ENCODE measurements at regions of chr4 and their contacts with region 1.

Region 1: DNA sequence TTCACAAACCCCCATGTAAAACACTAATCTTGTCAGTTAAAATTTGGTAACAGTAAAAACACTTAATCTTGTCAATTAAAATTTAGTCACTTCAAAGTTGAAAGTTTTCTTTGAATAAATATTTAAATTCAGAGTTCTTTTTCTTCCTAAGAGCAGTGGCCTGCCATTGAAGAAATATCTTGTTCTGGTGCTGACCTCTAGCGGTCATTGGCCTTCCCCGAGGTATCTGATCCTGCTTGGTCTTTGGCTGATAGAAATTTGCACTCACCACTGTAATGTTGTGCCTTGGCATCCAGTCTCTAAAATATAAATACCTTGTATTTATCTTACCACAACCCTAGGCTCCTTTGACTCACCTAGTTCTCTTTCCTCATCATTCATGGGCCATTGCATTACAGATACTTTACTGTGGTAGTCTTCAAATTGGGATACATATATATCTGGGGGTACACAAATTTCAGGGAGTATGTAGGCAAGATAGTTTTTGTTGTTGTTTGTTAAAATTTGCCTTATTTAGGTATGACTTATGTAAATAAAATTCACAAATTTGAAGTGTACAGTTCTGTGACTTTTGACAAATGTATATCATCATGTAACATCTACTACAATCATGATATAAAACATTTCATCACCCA is 6.7 kb upstream of the ART3 start:
- DNase-seq: peak; percentile 55
- H3K4me3 ChIP-seq: no peak overlapping the region
- H3K27ac ChIP-seq: no peak overlapping the region
- H3K4me1 ChIP-seq: peaks cover 4% of the 10 kb centered on the region
- H3K27me3 ChIP-seq: no peaks in the 10 kb centered on the region
- CTCF ChIP-seq: peak; percentile 94

Region 2: DNA sequence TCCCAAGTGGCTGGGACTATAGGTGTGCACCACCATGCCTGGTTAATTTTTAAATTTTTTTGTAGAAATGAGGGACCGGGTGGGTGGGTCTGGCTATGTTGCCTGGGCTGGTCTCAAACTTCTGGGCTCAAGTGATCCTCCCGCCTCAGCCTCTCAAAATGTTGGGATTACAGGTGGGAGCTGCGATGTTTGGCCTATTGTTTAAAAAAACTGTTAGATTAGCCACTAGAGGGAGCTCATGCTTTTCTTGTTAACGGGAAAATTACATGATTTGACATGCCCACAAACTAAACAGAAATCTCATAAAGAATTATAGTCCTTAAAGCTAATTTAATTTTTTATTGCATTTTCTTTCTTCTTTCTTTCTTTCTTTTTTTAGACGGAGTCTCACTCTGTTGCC is 72.0 kb before region 1 on chr4:
- intact Hi-C with region 1: loop called (anchors 2 kb)
- DNase-seq: no peak
- H3K4me3 ChIP-seq: no peak overlapping the region
- H3K27ac ChIP-seq: no peak overlapping the region
- H3K4me1 ChIP-seq: peaks cover 5% of the 10 kb centered on the region
- H3K27me3 ChIP-seq: no peaks in the 10 kb centered on the region
- CTCF ChIP-seq: peak; percentile 78

Region 3: GRCh38 chr4:76002176-76002575 is 65.6 kb before region 1 on chr4:
- intact Hi-C with region 1: loop called (anchors 2 kb)
- DNase-seq: no peak
- H3K4me3 ChIP-seq: no peak overlapping the region
- H3K27ac ChIP-seq: peak overlapping the region; percentile 59
- H3K4me1 ChIP-seq: peaks cover 10% of the 10 kb centered on the region
- H3K27me3 ChIP-seq: no peaks in the 10 kb centered on the region
- CTCF ChIP-seq: no peak

Region 4: GRCh38 chr4:76178296-76178695 is 110.5 kb after region 1 on chr4:
- intact Hi-C with region 1: no loop called
- DNase-seq: no peak
- H3K4me3 ChIP-seq: no peak overlapping the region
- H3K27ac ChIP-seq: peak overlapping the region; percentile 46
- H3K4me1 ChIP-seq: peaks cover 37% of the 10 kb centered on the region
- H3K27me3 ChIP-seq: no peaks in the 10 kb centered on the region
- CTCF ChIP-seq: no peak

Measured in left ventricle myocardium inferior (tissue), 1 donor.